Activated B cell treated with CpG ODN at 0.5 μM for 24 hours (primary cell): ENCODE measurements at regions of chr1 and their contacts with region 1.

Region 1: GRCh38 chr1:173409613-173410012 is 67.5 kb upstream of the PRDX6 start:
- DNase-seq: no peak
- ATAC-seq: peak; percentile 25
- H3K4me3 Mint-ChIP-seq: peak overlapping the region; percentile 81
- H3K27ac Mint-ChIP-seq: peak overlapping the region; percentile 95
- H3K4me1 Mint-ChIP-seq: peaks cover 91% of the 10 kb centered on the region
- H3K27me3 Mint-ChIP-seq: no peaks in the 10 kb centered on the region
- CTCF ChIP-seq: no peak

Region 2: GRCh38 chr1:172971291-172971690 is 438.3 kb before region 1 on chr1:
- CTCF ChIA-PET with region 1: no interaction called
- POLR2A ChIA-PET with region 1: interaction called, 10 read pairs
- intact Hi-C with region 1: no loop called
- DNase-seq: no peak
- ATAC-seq: no peak
- H3K4me3 Mint-ChIP-seq: no peak overlapping the region
- H3K27ac Mint-ChIP-seq: no peak overlapping the region
- H3K4me1 Mint-ChIP-seq: no peaks in the 10 kb centered on the region
- H3K27me3 Mint-ChIP-seq: peaks cover 2% of the 10 kb centered on the region
- CTCF ChIP-seq: no peak

Region 3: DNA sequence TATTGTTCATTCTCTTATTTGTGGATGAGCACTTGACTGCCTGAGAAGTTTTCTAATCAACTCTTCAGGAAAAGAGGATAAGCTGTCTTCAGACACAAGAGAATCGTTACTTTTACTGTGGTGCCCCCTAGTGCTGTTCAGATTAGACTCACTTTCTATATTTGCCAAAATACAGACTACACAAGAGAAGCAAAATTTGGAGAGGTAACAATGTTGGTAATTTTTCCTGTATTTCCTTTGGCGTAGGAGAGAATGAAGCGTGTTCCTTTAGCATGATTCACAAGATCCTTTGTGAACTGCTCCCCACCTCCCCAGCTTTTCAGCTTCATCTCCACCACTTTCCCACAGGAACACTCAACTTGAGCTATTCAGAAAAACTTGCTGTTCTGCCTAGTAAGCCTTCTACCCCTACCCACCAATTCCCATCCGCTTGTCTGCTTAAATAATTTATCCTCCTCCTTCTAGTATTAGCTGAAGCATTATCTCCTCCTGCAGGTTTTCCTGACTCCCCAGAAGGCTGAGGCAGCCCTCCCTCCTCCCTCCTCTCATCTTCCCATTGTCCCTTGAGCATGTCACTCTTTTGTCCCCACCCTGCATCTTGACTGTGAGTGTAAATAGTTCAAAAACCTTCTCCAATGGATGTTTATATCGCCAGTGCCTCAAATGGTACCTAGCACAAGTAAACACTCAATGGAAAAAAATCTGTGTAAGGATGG is 207.0 kb before region 1 on chr1:
- CTCF ChIA-PET with region 1: interaction called, 6 read pairs
- POLR2A ChIA-PET with region 1: interaction called, 8 read pairs
- intact Hi-C with region 1: loop called (anchors 2 kb)
- DNase-seq: no peak
- ATAC-seq: no peak
- H3K4me3 Mint-ChIP-seq: no peak overlapping the region
- H3K27ac Mint-ChIP-seq: no peak overlapping the region
- H3K4me1 Mint-ChIP-seq: peaks cover 50% of the 10 kb centered on the region
- H3K27me3 Mint-ChIP-seq: no peaks in the 10 kb centered on the region
- CTCF ChIP-seq: no peak

Region 4: DNA sequence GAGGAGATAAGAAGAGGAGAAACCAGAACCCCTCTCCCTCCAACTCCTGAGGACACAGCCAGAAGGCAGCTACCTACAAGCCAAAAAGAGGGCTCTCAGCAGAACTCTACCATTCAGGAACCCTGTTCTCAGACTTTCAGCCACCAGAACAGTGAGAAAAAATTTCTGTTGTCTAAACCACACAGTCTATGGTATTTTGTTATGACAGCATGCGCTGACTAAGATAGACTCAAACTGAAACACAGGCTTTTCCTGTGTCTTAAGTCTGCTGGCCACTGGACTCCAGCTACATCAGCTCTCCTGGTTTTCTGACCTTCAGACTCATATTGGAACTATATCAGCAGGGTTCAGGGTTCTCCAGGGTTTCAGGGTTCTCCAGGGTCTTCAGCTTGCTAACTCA is 76.0 kb before region 1 on chr1:
- CTCF ChIA-PET with region 1: interaction called, 3 read pairs
- POLR2A ChIA-PET with region 1: interaction called, 6 read pairs
- intact Hi-C with region 1: loop called (anchors 2 kb)
- DNase-seq: no peak
- ATAC-seq: no peak
- H3K4me3 Mint-ChIP-seq: no peak overlapping the region
- H3K27ac Mint-ChIP-seq: peak overlapping the region; percentile 80
- H3K4me1 Mint-ChIP-seq: peaks cover 37% of the 10 kb centered on the region
- H3K27me3 Mint-ChIP-seq: no peaks in the 10 kb centered on the region
- CTCF ChIP-seq: no peak

Region 5: DNA sequence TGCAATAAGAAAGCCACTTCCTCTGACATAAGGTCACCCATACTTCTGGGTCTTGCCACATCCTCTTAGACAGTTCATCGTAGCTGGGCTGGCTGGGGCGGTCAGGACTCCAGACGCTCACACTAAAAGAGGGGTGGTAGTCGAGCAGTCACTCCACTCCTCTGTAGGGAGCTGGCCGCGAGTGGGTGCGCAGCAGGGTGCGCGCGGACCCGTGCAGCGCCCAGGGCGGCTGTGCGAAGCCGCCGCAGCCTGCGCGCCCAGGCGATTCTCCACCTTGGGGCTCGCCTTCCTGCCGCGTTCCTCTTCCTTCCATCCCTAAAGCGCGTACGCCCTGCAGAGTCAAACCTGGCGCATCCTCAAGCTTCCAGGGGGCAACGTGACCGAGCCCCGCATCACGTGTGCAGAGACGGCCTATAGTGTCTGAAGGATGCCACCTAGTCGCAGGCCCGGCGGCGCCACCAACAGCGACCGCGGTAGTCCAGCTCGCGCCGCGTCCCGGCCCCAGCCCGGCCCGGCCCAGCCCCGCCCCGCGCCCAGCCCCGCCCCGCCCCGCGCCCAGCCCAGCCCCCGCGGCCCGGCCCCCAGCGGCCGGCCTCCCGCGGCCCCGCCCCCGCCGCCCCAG is 67.2 kb after region 1 on chr1:
- CTCF ChIA-PET with region 1: no interaction called
- POLR2A ChIA-PET with region 1: interaction called, 16 read pairs
- intact Hi-C with region 1: no loop called
- DNase-seq: peak; percentile 70
- ATAC-seq: peak; percentile 94
- H3K4me3 Mint-ChIP-seq: peak overlapping the region; percentile 92
- H3K27ac Mint-ChIP-seq: peak overlapping the region; percentile 95
- H3K4me1 Mint-ChIP-seq: peaks cover 40% of the 10 kb centered on the region
- H3K27me3 Mint-ChIP-seq: no peaks in the 10 kb centered on the region
- CTCF ChIP-seq: no peak

Region 6: DNA sequence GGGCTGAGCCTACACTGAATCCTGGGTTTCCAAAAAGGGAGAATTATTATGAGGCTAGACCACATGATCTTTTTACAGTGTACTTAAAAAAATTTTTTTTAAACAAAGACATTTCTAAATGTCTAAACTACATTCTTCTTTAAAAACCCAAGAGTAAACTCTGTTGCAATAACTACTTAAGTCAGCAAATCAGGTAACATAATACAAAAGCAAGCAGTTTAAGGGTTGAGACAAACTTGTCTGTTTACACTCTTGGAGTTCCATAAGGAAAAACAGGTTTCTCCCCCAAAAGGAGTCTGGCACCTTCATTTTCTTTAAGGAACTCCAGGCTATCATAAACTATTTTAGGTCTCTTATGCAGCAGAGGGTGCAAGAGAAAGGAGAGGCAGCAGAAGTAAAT is 272.6 kb after region 1 on chr1:
- CTCF ChIA-PET with region 1: no interaction called
- POLR2A ChIA-PET with region 1: no interaction called
- intact Hi-C with region 1: no loop called
- DNase-seq: no peak
- ATAC-seq: no peak
- H3K4me3 Mint-ChIP-seq: no peak overlapping the region
- H3K27ac Mint-ChIP-seq: no peak overlapping the region
- H3K4me1 Mint-ChIP-seq: no peaks in the 10 kb centered on the region
- H3K27me3 Mint-ChIP-seq: peaks cover 9% of the 10 kb centered on the region
- CTCF ChIP-seq: no peak

Region 7: GRCh38 chr1:174022080-174022975 is 612.7 kb after region 1 on chr1 and contains the start of gene RC3H1:
- CTCF ChIA-PET with region 1: no interaction called
- POLR2A ChIA-PET with region 1: interaction called, 5 read pairs
- intact Hi-C with region 1: loop called (anchors 5 kb)
- DNase-seq: peak; percentile 88
- ATAC-seq: peak; percentile 93
- H3K4me3 Mint-ChIP-seq: peak within 1 kb of the TSS; percentile 97
- H3K27ac Mint-ChIP-seq: peak within 1 kb of the TSS; percentile 96
- H3K4me1 Mint-ChIP-seq: peaks cover 42% of the 10 kb centered on the region
- H3K27me3 Mint-ChIP-seq: no peaks in the 10 kb centered on the region
- CTCF ChIP-seq: no peak
- total RNA-seq, gene RC3H1: 45.6 and 55.6 TPM in 2 replicates

Region 8: DNA sequence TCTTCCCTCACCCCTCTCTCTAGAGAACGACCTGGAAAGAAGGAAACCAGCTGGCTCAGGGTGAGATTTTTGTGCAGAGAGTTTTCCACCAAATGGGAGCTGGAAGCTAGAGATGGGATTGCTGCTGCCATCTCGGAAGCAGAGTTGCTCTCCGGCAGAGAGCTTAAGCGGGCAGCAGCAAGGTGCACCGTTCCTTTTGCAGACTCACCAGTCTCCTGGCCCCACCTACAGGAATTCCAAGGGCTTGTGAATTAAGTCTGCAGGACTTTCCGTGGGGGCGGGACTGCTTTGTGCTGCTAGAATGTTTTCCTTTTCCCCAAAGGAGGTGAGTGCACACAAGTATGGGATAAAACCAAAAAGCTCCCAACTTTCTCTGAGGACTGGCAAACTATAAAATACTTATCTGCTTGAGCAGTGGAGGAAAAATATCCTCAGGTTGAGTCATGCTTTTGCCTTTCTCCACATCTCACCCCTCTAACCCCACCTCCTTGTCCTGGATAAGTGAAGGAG is 1812.1 kb after region 1 on chr1:
- CTCF ChIA-PET with region 1: no interaction called
- POLR2A ChIA-PET with region 1: no interaction called
- intact Hi-C with region 1: loop called (anchors 10 kb)
- DNase-seq: no peak
- ATAC-seq: no peak
- H3K4me3 Mint-ChIP-seq: no peak overlapping the region
- H3K27ac Mint-ChIP-seq: no peak overlapping the region
- H3K4me1 Mint-ChIP-seq: peaks cover 78% of the 10 kb centered on the region
- H3K27me3 Mint-ChIP-seq: no peaks in the 10 kb centered on the region
- CTCF ChIP-seq: no peak